Head of caudate nucleus (tissue), 42 donors: ENCODE measurements at regions of chr1 and their contacts with region 1.

Region 1: GRCh38 chr1:175319418-175320230 is 127.0 kb upstream of the KIAA0040 start:
- DNase-seq: peak; percentile 33 to 88 (median 72)

Region 2: GRCh38 chr1:175023043-175023921 is 296.3 kb before region 1 on chr1 and contains the start of gene MRPS14:
- intact Hi-C with region 1: no loop called
- DNase-seq: peak; percentile 94 to 99 (median 97)

Region 3: DNA sequence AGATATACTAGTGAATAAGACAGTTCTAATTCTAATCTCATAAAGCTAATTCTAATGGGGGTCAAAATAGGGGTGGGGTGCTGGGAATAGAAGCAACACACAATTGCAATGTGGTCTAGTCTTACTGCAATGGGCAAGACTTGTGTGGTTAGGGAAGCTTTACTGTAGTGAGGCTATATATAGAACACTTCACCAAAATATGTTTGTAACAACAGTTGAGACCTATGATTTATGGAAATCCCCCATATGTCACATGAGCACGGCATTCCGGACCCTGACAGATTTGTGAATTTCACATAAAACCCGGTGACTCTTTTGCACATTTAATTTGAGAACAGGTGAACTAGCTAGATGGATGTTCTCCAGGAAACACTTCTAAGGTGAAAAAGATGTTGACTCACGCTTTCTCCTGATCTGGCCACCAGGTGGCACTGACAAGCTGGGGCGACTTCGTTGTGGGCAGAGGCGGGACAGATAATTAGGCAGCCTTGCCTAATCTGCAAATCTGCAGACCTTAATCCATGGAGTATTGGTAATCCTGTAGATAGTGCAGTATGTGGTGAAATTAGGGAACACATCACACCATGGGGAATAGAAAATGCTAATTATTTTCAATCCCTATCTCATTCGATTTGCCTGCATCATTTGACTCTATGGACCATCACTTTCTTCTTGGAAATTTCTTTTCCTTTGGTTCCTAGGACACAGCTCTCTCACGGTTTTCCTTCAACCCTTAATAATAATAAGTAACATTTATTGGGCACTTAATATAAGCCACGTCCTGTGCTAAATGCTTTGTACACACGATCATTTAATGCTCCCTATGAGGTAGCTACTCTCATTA is 164.8 kb before region 1 on chr1:
- intact Hi-C with region 1: loop called (anchors 5 kb)
- DNase-seq: peak; percentile 19 to 87 (median 72)

Region 4: DNA sequence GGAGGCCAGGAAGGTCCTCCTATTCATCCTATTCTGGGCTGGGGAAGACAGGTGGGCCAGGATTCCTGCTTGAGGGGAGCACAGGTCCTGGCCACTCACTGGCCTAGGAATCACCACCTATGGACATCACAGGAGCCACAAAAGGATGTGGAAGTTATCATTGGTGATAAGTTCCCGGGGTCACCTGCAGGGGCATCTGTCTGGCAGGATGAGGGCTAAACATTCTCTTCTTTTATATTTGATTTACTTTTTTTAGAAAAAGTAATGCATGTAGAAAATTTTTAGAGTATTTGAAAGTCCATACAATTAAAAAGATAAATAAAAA is 93.9 kb before region 1 on chr1:
- intact Hi-C with region 1: no loop called
- DNase-seq: no peak

Region 5: GRCh38 chr1:175763797-175764196 is 444.2 kb after region 1 on chr1:
- intact Hi-C with region 1: no loop called
- DNase-seq: no peak